Astrocyte of the cerebellum (primary cell): ENCODE measurements at regions of chr16 and their contacts with region 1.

Region 1: DNA sequence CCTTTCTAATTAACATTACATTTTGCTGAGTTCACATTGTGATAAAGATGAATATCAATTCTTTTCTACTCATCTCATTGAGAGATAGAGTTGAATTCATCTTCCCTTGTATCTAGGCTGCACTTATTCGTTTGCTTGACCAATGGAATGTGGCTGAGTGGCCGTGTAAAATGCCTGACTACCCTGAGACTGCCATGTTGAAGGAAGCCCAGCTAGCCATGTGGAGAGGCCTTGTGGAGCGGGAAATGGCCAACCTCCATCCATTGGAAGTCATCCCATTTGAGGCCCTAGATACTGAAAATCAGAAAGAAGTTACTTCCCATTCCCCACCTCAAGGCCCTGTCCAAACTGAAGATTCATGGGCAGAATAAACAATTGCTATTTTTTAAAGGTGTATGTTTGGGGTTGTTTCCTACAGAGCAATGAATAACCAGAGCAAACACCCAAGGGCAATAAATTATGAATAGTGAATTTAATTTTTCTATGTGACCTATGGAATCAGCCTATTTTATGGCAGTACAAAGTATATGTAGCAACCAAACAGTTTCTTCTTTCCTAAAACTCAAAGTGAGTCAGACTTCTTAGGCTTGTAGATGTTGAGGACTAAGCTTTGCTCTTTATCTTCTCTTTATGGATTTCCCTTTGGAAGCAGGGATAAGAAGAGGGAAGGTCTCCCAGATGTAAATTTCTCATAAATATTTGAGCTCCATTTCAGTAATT is 545.1 kb downstream of the MAF start:
- DNase-seq: no peak
- H3K4me3 ChIP-seq: no peak overlapping the region
- CTCF ChIP-seq: no peak

Region 2: DNA sequence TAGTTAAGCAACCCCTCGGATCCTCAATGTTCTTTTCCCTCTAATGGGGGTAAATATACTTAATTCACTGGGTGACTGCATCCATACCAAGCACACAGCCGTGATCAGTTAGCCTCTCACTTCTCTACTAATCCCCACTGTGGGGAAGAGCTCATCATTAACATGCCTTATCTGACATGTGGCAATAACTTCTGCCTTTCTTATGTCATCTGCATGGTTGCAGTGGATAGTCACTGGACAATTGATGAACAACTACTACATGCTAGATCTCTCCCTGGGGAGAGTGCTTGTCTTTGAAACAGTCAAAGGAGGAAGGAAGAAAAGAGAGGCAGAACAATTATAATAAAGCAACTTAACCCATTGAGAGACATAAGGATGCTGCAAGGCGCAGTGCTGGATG is 35.6 kb before region 1 on chr16:
- in situ Hi-C with region 1: loop called (anchors 5 kb)
- DNase-seq: no peak
- H3K4me3 ChIP-seq: no peak overlapping the region
- CTCF ChIP-seq: no peak

Region 3: GRCh38 chr16:79137396-79137939 is 82.1 kb after region 1 on chr16:
- in situ Hi-C with region 1: no loop called
- DNase-seq: no peak
- H3K4me3 ChIP-seq: no peak overlapping the region
- CTCF ChIP-seq: no peak